ENCODE measurements at regions of chr4 and their contacts with region 1.

Region 1: GRCh38 chr4:120066517-120067340 is at the start of gene MAD2L1:
- DNase-seq: peak; percentile 95
- ATAC-seq: peak; percentile 94
- H3K4me3 Mint-ChIP-seq: peak within 1 kb of the TSS; percentile 99
- H3K27ac Mint-ChIP-seq: peak within 1 kb of the TSS; percentile 97
- H3K4me1 Mint-ChIP-seq: peaks cover 31% of the 10 kb centered on the region
- H3K27me3 Mint-ChIP-seq: no peaks in the 10 kb centered on the region
- CTCF ChIP-seq: no peak
- total RNA-seq, gene MAD2L1: 3.4 and 5.4 TPM in 2 replicates

Region 2: DNA sequence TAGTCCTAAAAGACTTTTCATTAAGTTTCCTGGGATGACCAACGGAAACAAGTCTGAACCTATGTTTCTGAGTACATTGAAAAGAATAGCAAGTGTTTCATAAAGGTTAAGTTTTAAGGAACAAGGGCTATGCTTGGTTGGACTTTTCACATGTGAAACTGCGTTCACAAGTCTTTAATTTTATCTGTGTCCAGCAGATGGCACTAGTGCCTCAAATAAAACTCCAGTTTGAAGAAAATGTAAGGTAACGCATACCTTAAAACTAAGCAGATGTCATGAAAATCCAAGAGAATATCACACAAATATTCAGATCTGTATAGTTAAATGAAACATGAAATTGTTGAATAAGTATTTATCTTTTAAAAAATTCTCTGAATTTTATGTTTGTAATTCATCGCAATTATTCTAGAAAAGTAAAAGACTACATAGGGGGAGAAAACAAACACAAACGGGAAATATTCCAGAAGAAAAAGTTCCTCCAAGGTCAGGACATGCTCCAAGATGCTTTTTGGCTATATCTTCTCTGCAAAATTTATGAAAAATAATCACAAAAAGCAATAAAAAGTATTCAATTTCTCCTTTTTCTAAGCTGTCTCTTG is 89.5 kb after region 1 on chr4:
- CTCF ChIA-PET with region 1: no interaction called
- POLR2A ChIA-PET with region 1: no interaction called
- intact Hi-C with region 1: loop called (anchors 1 kb)
- DNase-seq: no peak
- ATAC-seq: no peak
- H3K4me3 Mint-ChIP-seq: no peak overlapping the region
- H3K27ac Mint-ChIP-seq: no peak overlapping the region
- H3K4me1 Mint-ChIP-seq: no peaks in the 10 kb centered on the region
- H3K27me3 Mint-ChIP-seq: peaks cover 2% of the 10 kb centered on the region
- CTCF ChIP-seq: peak; percentile 68

Region 3: GRCh38 chr4:120293341-120293740 is 226.6 kb after region 1 on chr4:
- CTCF ChIA-PET with region 1: no interaction called
- POLR2A ChIA-PET with region 1: no interaction called
- intact Hi-C with region 1: no loop called
- DNase-seq: no peak
- ATAC-seq: no peak
- H3K4me3 Mint-ChIP-seq: no peak overlapping the region
- H3K27ac Mint-ChIP-seq: no peak overlapping the region
- H3K4me1 Mint-ChIP-seq: no peaks in the 10 kb centered on the region
- H3K27me3 Mint-ChIP-seq: no peaks in the 10 kb centered on the region
- CTCF ChIP-seq: no peak

Region 4: DNA sequence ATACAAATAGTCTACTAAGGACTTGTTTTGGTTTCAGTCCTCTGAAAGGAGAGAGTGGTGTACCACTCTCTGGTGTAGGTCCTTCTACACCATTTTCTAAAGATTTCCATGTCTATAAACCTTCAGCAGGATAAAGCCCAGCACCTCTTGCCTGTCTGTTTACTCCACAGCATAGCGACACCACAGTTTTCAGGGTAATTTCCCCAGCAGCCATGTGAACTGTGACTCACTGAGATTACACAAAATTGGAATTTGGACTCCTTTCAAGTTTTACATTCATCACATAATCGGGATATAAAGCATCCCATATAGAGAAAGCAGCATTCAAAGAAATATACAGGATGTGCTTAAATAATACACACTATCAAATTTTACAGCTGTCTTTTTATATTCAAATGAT is 626.2 kb after region 1 on chr4:
- CTCF ChIA-PET with region 1: no interaction called
- POLR2A ChIA-PET with region 1: no interaction called
- intact Hi-C with region 1: no loop called
- DNase-seq: no peak
- ATAC-seq: no peak
- H3K4me3 Mint-ChIP-seq: no peak overlapping the region
- H3K27ac Mint-ChIP-seq: no peak overlapping the region
- H3K4me1 Mint-ChIP-seq: no peaks in the 10 kb centered on the region
- H3K27me3 Mint-ChIP-seq: no peaks in the 10 kb centered on the region
- CTCF ChIP-seq: no peak

Region 5: GRCh38 chr4:121096629-121097028 is 1029.9 kb after region 1 on chr4:
- CTCF ChIA-PET with region 1: no interaction called
- POLR2A ChIA-PET with region 1: no interaction called
- intact Hi-C with region 1: loop called (anchors 1 kb)
- DNase-seq: no peak
- ATAC-seq: no peak
- H3K4me3 Mint-ChIP-seq: no peak overlapping the region
- H3K27ac Mint-ChIP-seq: no peak overlapping the region
- H3K4me1 Mint-ChIP-seq: no peaks in the 10 kb centered on the region
- H3K27me3 Mint-ChIP-seq: no peaks in the 10 kb centered on the region
- CTCF ChIP-seq: no peak

Region 6: DNA sequence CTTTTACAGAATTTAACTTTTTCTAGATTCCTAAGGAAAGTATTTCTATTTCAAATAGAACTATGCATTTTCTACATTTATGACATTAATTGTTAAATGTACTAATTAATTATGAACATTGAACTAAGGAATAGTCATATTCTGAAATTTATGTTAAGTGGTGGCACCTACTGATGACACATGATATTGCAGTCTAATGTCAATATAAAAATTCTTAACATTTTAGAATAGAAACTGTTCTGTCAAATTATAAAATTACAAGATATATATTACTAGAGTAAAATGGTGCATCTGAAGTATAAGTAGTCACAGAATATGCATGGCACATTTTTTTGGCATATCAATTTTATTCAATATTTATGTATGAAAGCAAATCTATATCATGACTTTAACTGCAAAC is 1045.8 kb after region 1 on chr4:
- CTCF ChIA-PET with region 1: no interaction called
- POLR2A ChIA-PET with region 1: no interaction called
- intact Hi-C with region 1: loop called (anchors 5 kb)
- DNase-seq: no peak
- ATAC-seq: no peak
- H3K4me3 Mint-ChIP-seq: no peak overlapping the region
- H3K27ac Mint-ChIP-seq: no peak overlapping the region
- H3K4me1 Mint-ChIP-seq: no peaks in the 10 kb centered on the region
- H3K27me3 Mint-ChIP-seq: peaks cover 4% of the 10 kb centered on the region
- CTCF ChIP-seq: no peak

Region 7: DNA sequence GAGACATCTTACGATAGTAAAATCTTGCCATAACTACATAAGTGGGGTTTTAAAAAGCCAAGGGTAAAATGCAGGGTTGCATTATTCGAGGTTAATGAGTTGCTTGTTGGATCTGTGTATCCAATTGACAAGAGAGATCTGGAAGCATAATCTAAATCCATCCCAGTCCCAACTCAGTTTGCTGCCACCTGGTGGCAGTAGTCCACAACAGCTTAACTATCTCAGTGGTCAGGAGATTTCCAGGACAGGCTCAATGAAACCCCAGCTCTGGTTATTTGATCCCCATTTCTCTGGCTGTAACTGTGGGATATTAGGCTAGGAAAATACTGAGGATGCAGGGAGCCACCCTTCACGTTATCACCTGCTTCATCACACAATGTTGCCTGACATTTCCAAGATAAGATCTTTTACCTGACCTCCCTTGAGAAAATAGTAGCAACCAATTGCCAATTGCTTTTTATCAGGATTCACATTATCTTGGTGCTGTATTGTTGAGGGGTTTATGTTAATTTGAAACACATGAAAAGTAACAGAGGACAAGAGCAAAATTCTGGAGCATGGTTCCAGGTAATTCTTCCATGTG is 1185.6 kb after region 1 on chr4:
- CTCF ChIA-PET with region 1: no interaction called
- POLR2A ChIA-PET with region 1: no interaction called
- intact Hi-C with region 1: loop called (anchors 1 kb)
- DNase-seq: no peak
- ATAC-seq: no peak
- H3K4me3 Mint-ChIP-seq: no peak overlapping the region
- H3K27ac Mint-ChIP-seq: no peak overlapping the region
- H3K4me1 Mint-ChIP-seq: no peaks in the 10 kb centered on the region
- H3K27me3 Mint-ChIP-seq: no peaks in the 10 kb centered on the region
- CTCF ChIP-seq: peak; percentile 24

Measured in activated B cell treated with CpG ODN at 0.5 μM for 24 hours (primary cell).